MCF 10A (cell line): ENCODE measurements at regions of chr9 and their contacts with region 1.

Region 1: GRCh38 chr9:34403554-34404380 is 27.1 kb upstream of the MYORG start:
- DNase-seq: peak; percentile 71
- H3K4me3 Mint-ChIP-seq: no peak overlapping the region
- H3K27ac Mint-ChIP-seq: no peak overlapping the region
- H3K4me1 Mint-ChIP-seq: no peaks in the 10 kb centered on the region
- H3K27me3 Mint-ChIP-seq: no peaks in the 10 kb centered on the region
- CTCF ChIP-seq: peak; percentile 94

Region 2: GRCh38 chr9:34334337-34334824 is 69.4 kb before region 1 on chr9:
- CTCF ChIA-PET with region 1: interaction called, 12 read pairs
- POLR2A ChIA-PET with region 1: no interaction called
- intact Hi-C with region 1: no loop called
- DNase-seq: no peak
- H3K4me3 Mint-ChIP-seq: no peak overlapping the region
- H3K27ac Mint-ChIP-seq: no peak overlapping the region
- H3K4me1 Mint-ChIP-seq: peaks cover 19% of the 10 kb centered on the region
- H3K27me3 Mint-ChIP-seq: no peaks in the 10 kb centered on the region
- CTCF ChIP-seq: no peak

Region 3: GRCh38 chr9:34437006-34437925 is 33.5 kb after region 1 on chr9:
- CTCF ChIA-PET with region 1: interaction called, 18 read pairs
- POLR2A ChIA-PET with region 1: no interaction called
- intact Hi-C with region 1: no loop called
- DNase-seq: peak; percentile 81
- H3K4me3 Mint-ChIP-seq: no peak overlapping the region
- H3K27ac Mint-ChIP-seq: no peak overlapping the region
- H3K4me1 Mint-ChIP-seq: no peaks in the 10 kb centered on the region
- H3K27me3 Mint-ChIP-seq: no peaks in the 10 kb centered on the region
- CTCF ChIP-seq: peak; percentile 74

Region 4: DNA sequence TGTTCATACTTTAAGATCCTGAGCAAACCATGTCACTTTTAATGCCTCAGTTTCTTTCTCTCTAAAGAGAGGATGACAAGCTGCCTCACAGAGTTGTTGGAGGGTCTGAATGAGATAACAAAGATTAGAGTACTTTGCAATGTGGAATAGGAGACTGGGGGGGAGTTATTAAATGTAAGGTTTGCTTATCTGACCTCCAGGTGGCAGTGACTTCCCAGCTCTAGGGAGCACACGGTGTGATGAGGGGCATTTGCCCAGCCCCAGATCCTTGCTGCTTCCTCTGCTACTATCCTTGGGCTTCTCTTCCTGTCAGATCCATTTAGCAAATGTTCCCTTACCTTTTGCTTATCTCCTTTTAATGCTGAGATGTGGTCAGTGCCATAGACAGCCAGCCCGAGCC is 88.3 kb after region 1 on chr9:
- CTCF ChIA-PET with region 1: interaction called, 10 read pairs
- POLR2A ChIA-PET with region 1: no interaction called
- intact Hi-C with region 1: no loop called
- DNase-seq: no peak
- H3K4me3 Mint-ChIP-seq: no peak overlapping the region
- H3K27ac Mint-ChIP-seq: no peak overlapping the region
- H3K4me1 Mint-ChIP-seq: no peaks in the 10 kb centered on the region
- H3K27me3 Mint-ChIP-seq: peaks cover 48% of the 10 kb centered on the region
- CTCF ChIP-seq: no peak

Region 5: DNA sequence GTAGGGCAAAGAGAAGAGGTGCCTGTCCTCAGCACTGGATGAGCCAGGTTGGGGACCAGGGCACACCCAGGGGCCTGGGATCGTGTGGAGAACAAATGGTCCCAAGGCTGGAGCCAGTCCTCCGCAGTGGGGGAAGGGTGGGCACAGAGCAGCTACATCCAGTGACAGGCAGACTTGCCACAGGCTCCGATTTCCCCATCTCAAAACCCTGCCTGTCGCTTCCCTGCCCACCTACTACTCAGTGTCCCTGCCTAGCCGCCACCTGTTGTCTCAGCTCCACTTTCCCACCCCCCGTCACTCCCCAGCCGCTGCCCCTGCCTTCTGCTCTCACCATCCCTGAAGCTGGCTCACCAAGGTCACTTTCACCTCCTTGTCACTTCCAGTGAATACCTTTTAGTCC is 132.9 kb after region 1 on chr9:
- CTCF ChIA-PET with region 1: interaction called, 11 read pairs
- POLR2A ChIA-PET with region 1: no interaction called
- intact Hi-C with region 1: no loop called
- DNase-seq: no peak
- H3K4me3 Mint-ChIP-seq: no peak overlapping the region
- H3K27ac Mint-ChIP-seq: no peak overlapping the region
- H3K4me1 Mint-ChIP-seq: peaks cover 8% of the 10 kb centered on the region
- H3K27me3 Mint-ChIP-seq: peaks cover 46% of the 10 kb centered on the region
- CTCF ChIP-seq: no peak

Region 6: DNA sequence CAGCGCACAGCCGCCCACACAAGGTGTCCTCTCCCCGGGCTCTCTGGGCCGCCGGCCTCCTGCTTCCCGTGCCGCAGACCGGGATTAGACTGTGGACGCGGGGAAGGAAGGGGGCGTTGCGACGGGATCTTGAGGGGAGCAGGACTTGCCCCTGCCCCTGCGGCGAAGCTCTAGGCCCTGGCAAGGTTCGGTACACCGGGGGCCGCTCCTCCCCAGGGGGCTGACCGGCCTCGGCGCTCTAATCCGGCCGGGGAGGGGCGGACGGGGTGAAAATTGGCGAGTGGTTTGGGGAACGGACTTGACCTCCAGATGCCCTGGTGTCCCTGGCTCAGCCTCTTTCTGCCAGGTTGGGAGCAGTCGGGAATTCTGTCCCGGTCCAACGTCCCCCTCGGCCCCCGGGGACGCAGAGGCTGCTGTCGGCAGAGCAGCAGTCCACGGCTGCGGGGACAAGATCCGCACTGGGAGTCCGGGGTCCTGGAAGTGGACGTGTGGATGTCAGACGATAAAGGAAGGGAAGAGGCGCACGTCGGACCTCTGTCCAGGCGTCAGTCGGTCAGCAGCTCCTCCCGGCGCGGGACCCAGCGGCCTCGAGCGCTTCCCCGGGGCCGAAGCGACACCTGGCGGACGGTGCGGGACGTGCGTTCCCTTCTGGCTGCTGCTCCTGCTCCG is 187.6 kb after region 1 on chr9:
- CTCF ChIA-PET with region 1: interaction called, 35 read pairs
- POLR2A ChIA-PET with region 1: no interaction called
- intact Hi-C with region 1: no loop called
- DNase-seq: peak; percentile 68
- H3K4me3 Mint-ChIP-seq: no peak overlapping the region
- H3K27ac Mint-ChIP-seq: no peak overlapping the region
- H3K4me1 Mint-ChIP-seq: peaks cover 20% of the 10 kb centered on the region
- H3K27me3 Mint-ChIP-seq: peaks cover 59% of the 10 kb centered on the region
- CTCF ChIP-seq: peak; percentile 94

Region 7: GRCh38 chr9:34637356-34638137 is 233.8 kb after region 1 on chr9 and contains the start of gene SIGMAR1:
- CTCF ChIA-PET with region 1: interaction called, 13 read pairs
- POLR2A ChIA-PET with region 1: no interaction called
- intact Hi-C with region 1: no loop called
- DNase-seq: peak; percentile 93
- H3K4me3 Mint-ChIP-seq: peak within 1 kb of the TSS; percentile 92
- H3K27ac Mint-ChIP-seq: peak within 1 kb of the TSS; percentile 97
- H3K4me1 Mint-ChIP-seq: peaks cover 31% of the 10 kb centered on the region
- H3K27me3 Mint-ChIP-seq: no peaks in the 10 kb centered on the region
- CTCF ChIP-seq: no peak
- total RNA-seq, gene SIGMAR1: 82.1 and 99.8 TPM in 2 replicates